Motor neuron (in vitro differentiated cells): ENCODE measurements at regions of chr12 and their contacts with region 1.

Region 1: GRCh38 chr12:14629832-14630710 is 62.4 kb upstream of the PLBD1 start:
- ATAC-seq: peak; percentile 94 to 100 (median 100)
- H3K4me3 ChIP-seq: no peak overlapping the region
- H3K27ac ChIP-seq: no peak overlapping the region
- H3K4me1 ChIP-seq: no peaks in the 10 kb centered on the region

Region 2: GRCh38 chr12:14710632-14711320 is 80.7 kb after region 1 on chr12:
- in situ Hi-C with region 1: loop called in 1 of 9 experiments (anchors 5 kb)
- ATAC-seq: no peak
- H3K4me3 ChIP-seq: no peak overlapping the region
- H3K27ac ChIP-seq: no peak overlapping the region
- H3K4me1 ChIP-seq: no peaks in the 10 kb centered on the region